HepG2 (cell line): ENCODE measurements at regions of chr1 and their contacts with region 1.

Region 1: GRCh38 chr1:110338886-110339406 is at the start of gene RBM15:
- DNase-seq: peak; percentile 100
- ATAC-seq: peak; percentile 88
- H3K4me3 ChIP-seq: peak within 1 kb of the TSS; percentile 84 to 91 (median 86)
- H3K27ac ChIP-seq: peak within 1 kb of the TSS; percentile 100
- H3K4me1 ChIP-seq: peaks cover 73% of the 10 kb centered on the region
- H3K27me3 ChIP-seq: no peaks in the 10 kb centered on the region; a peak in 1 of 5 replicates
- CTCF ChIP-seq: no peak
- EP300 ChIP-seq: peak in 1 of 2 experiments; percentile 45; a peak in 1 of 4 replicates
- POLR2A ChIP-seq: no peak
- RAD21 ChIP-seq: no peak
- total RNA-seq, gene RBM15: 35.2 and 36.4 TPM in 2 replicates

Region 2: DNA sequence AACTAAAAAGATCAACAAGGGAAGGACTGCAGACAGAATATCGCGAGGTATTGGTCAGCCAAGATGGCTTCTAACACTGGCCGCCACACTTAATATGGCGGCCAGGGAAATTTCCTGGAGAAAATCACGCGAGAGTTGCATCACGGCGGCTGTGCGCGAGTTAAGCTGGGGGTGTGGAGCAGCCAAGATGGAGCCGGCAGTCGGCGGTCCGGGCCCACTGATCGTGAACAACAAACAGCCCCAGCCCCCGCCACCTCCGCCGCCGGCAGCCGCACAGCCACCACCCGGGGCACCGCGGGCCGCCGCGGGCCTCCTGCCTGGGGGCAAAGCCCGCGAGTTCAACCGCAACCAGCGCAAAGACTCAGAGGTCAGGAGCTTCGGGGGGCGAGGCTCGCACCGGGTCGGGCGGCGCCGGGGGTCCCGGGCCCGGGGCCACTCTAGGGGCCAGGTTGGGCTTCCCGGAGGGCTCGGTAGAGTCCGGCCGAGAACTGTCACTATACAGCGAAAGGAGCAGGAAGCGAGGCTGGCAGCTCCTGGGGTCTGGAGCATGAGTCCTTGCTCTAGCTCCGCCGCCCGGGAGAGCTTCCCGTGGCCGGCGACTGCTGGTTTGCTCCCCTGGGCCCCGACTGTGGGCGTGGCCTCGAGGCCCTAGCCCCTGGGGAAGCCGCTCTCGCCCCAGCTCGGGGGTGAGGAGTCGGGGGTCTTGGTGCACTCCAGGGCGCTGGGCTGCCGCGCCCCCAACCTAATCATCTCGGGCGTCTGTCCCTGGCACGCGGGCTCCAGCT is 304.3 kb before region 1 on chr1 and contains the start of gene STRIP1:
- CTCF ChIA-PET with region 1: no interaction called
- POLR2A ChIA-PET with region 1: interaction called, 18 read pairs
- in situ Hi-C with region 1: no loop called
- intact Hi-C with region 1: no loop called
- DNase-seq: peak; percentile 95
- ATAC-seq: peak; percentile 92
- H3K4me3 ChIP-seq: peak within 1 kb of the TSS; percentile 92 to 98 (median 97)
- H3K27ac ChIP-seq: peak within 1 kb of the TSS; percentile 84
- H3K4me1 ChIP-seq: peaks cover 38% of the 10 kb centered on the region
- H3K27me3 ChIP-seq: no peaks in the 10 kb centered on the region
- CTCF ChIP-seq: no peak
- EP300 ChIP-seq: 0 out of 4 replicates have a peak, but pooled peaks of 1 of the 2 experiments have one; percentile 49
- POLR2A ChIP-seq: peak; percentile 52 to 64
- RAD21 ChIP-seq: peak; percentile 20; the same call in 1 of the 2 replicates
- total RNA-seq, gene STRIP1: 16.3 and 27.9 TPM in 2 replicates

Region 3: GRCh38 chr1:110312188-110313121 is 26.5 kb before region 1 on chr1:
- CTCF ChIA-PET with region 1: no interaction called
- POLR2A ChIA-PET with region 1: interaction called, 11 read pairs
- in situ Hi-C with region 1: no loop called
- intact Hi-C with region 1: no loop called
- DNase-seq: peak; percentile 59
- ATAC-seq: peak; percentile 99
- H3K4me3 ChIP-seq: peak overlapping the region in 1 of 3 experiments; percentile 4; a peak in 1 of 6 replicates
- H3K27ac ChIP-seq: no peak overlapping the region
- H3K4me1 ChIP-seq: peaks cover 8% of the 10 kb centered on the region; the same call in 1 of the 2 replicates
- H3K27me3 ChIP-seq: peaks cover 0 to 5% of the 10 kb centered on the region in 2 experiments; a peak in 2 of 5 replicates
- CTCF ChIP-seq: peak; percentile 97
- EP300 ChIP-seq: no peak
- POLR2A ChIP-seq: no peak
- RAD21 ChIP-seq: peak; percentile 94

Region 4: GRCh38 chr1:110321846-110322245 is 17.1 kb before region 1 on chr1:
- CTCF ChIA-PET with region 1: no interaction called
- POLR2A ChIA-PET with region 1: interaction called, 16 read pairs
- in situ Hi-C with region 1: no loop called
- intact Hi-C with region 1: no loop called
- DNase-seq: no peak
- ATAC-seq: peak; percentile 69
- H3K4me3 ChIP-seq: no peak overlapping the region
- H3K27ac ChIP-seq: peak overlapping the region; percentile 15
- H3K4me1 ChIP-seq: peaks cover 41% of the 10 kb centered on the region
- H3K27me3 ChIP-seq: no peaks in the 10 kb centered on the region
- CTCF ChIP-seq: no peak
- EP300 ChIP-seq: no peak
- POLR2A ChIP-seq: no peak
- RAD21 ChIP-seq: no peak

Region 5: DNA sequence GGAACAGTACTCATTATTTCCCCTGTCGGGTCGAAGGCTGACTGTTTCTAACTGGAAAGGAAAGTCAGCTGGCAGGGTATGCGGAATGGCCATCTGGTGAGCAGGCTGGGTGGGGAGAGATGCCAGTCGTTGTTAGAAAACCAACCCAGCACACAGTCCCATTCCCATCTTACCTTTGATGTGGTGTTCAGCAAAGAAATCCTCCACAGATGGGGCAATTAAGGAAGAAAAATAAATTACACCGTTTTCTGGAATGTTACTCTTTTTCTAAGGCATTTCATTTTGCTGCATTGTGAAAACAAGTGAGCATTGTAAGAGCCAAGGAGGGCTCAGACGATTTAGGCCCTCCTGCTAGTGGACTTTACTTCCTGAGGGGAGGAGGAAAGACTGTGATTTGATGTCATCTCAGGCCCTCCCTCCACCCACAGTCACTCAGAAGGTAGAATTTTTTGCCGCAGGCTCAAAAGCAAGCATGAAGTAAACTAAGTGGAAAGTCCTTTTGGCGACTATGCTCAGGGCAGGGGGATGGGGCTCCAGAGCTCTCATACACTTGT is 51.8 kb after region 1 on chr1 and contains the start of gene SLC16A4:
- CTCF ChIA-PET with region 1: no interaction called
- POLR2A ChIA-PET with region 1: interaction called, 3 read pairs
- in situ Hi-C with region 1: no loop called
- intact Hi-C with region 1: loop called (anchors 5 kb)
- DNase-seq: peak; percentile 76
- ATAC-seq: peak; percentile 78
- H3K4me3 ChIP-seq: 0 out of 6 replicates have a peak within 1 kb of the TSS, but pooled peaks of 1 of the 3 experiments have one; percentile 0
- H3K27ac ChIP-seq: peak within 1 kb of the TSS; percentile 19
- H3K4me1 ChIP-seq: peaks cover 39% of the 10 kb centered on the region
- H3K27me3 ChIP-seq: no peaks in the 10 kb centered on the region
- CTCF ChIP-seq: no peak
- EP300 ChIP-seq: no peak
- POLR2A ChIP-seq: no peak
- RAD21 ChIP-seq: no peak
- total RNA-seq, gene SLC16A4: 0.60 and 1.1 TPM in 2 replicates

Region 6: DNA sequence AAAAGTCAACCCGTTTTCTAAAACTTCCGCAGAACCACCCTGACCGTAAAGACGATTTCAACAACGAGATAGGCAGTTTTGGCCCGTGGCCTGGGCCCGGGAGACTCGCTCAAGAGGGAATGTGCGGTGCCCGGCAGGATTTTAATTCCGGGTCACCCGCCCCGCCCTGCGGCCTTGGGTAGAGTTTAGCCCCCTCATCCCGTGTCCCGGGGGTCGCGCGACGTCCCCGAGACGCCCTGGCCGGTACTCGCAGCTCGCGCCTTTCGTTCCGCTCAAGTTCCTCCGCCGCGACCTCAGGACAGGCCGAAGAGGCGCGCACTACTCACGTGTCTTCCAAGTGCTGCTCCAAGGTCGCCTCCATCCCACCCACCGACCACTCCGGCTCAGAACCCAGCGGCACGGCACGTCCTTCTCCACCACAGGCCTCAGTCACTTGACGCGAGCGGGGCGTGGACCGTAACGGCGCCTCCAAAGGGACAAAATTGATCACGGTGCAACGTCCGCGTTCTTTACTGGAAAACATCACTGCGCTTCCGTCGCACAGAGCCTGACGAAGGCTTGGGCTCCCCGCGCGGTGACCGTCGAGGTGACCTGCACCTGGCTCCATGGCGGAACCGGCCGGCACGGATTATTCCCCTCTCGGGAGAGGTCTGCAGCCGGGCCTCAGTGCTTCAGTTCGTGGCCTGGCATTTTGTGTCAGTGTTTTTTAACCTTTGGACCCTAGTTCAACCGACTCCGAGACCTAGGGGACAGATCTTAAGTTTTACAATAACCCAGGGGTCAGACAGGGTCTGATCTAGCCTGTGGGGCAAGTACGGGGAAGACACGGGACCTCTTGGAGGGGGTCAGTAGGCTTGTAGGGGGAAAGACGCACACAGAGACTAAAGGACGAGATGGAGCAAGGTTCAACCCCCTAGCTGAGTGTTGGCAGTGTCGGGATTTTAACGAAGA is 68.6 kb after region 1 on chr1 and contains the start of gene LAMTOR5:
- CTCF ChIA-PET with region 1: interaction called, 3 read pairs
- POLR2A ChIA-PET with region 1: interaction called, 30 read pairs
- in situ Hi-C with region 1: no loop called
- intact Hi-C with region 1: loop called (anchors 2 kb)
- DNase-seq: peak; percentile 90
- ATAC-seq: peak; percentile 96
- H3K4me3 ChIP-seq: peak within 1 kb of the TSS; percentile 90 to 98 (median 92)
- H3K27ac ChIP-seq: peak within 1 kb of the TSS; percentile 81
- H3K4me1 ChIP-seq: peaks cover 24% of the 10 kb centered on the region
- H3K27me3 ChIP-seq: no peaks in the 10 kb centered on the region; a peak in 1 of 5 replicates
- CTCF ChIP-seq: peak; percentile 37
- EP300 ChIP-seq: peak in 1 of 2 experiments; percentile 12; a peak in 1 of 4 replicates
- POLR2A ChIP-seq: peak; percentile 87 to 89
- RAD21 ChIP-seq: no peak
- total RNA-seq, gene LAMTOR5: 96.7 and 152 TPM in 2 replicates